ENCODE measurements at regions of chr4 and their contacts with region 1.

Region 1: DNA sequence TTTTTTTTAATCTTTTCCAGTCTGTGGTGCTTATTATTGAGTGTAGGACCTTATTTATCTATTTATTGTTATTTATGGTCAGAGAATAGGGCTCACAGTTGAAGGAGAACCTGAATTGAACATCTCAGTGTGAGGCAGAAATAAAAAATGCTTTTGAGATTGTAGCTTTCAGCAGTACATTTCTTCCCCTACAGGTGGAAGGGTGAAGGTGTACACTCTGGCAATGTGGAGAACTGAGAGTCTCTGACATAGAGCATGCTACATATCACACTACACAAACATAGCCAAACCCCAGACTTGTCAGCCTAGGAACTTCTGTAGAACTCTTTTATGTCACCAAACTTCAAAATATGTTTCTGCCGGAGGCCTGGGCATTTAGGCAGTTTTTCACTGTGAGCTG is 140.2 kb downstream of the STIM2 start:
- DNase-seq: no peak
- ATAC-seq: peak; percentile 49
- H3K4me3 ChIP-seq: no peak overlapping the region
- H3K27ac ChIP-seq: no peak overlapping the region
- H3K4me1 ChIP-seq: peaks cover 0 to 8% of the 10 kb centered on the region in 2 donors
- H3K27me3 ChIP-seq: no peaks in the 10 kb centered on the region
- CTCF ChIP-seq: peak in 1 of 2 donors; percentile 10

Region 2: GRCh38 chr4:26860157-26860921 is 140.5 kb before region 1 on chr4 and contains the start of gene STIM2:
- intact Hi-C with region 1: loop called in 1 of 2 experiments (anchors 10 kb)
- DNase-seq: peak; percentile 97 to 99 (median 99)
- ATAC-seq: peak; percentile 82
- H3K4me3 ChIP-seq: peak within 1 kb of the TSS; percentile 73 to 81
- H3K27ac ChIP-seq: peak within 1 kb of the TSS; percentile 96 to 97
- H3K4me1 ChIP-seq: peaks cover 21 to 63% of the 10 kb centered on the region in 2 donors
- H3K27me3 ChIP-seq: no peaks in the 10 kb centered on the region
- CTCF ChIP-seq: peak; percentile 11 to 62
- polyA plus RNA-seq, gene STIM2: 51.0 to 62.7 (median 53.4) TPM

Region 3: GRCh38 chr4:27187786-27188185 is 187.0 kb after region 1 on chr4:
- intact Hi-C with region 1: no loop called
- DNase-seq: no peak
- ATAC-seq: no peak
- H3K4me3 ChIP-seq: no peak overlapping the region
- H3K27ac ChIP-seq: no peak overlapping the region
- H3K4me1 ChIP-seq: no peaks in the 10 kb centered on the region
- H3K27me3 ChIP-seq: no peaks in the 10 kb centered on the region
- CTCF ChIP-seq: no peak

Region 4: GRCh38 chr4:27350161-27350560 is 349.3 kb after region 1 on chr4:
- intact Hi-C with region 1: no loop called
- DNase-seq: no peak
- ATAC-seq: no peak
- H3K4me3 ChIP-seq: no peak overlapping the region
- H3K27ac ChIP-seq: no peak overlapping the region
- H3K4me1 ChIP-seq: no peaks in the 10 kb centered on the region
- H3K27me3 ChIP-seq: no peaks in the 10 kb centered on the region
- CTCF ChIP-seq: no peak

Measured in left lung (tissue), 14 donors.